GM10248 (cell line): ENCODE measurements at regions of chr17 and their contacts with region 1.

Region 1: DNA sequence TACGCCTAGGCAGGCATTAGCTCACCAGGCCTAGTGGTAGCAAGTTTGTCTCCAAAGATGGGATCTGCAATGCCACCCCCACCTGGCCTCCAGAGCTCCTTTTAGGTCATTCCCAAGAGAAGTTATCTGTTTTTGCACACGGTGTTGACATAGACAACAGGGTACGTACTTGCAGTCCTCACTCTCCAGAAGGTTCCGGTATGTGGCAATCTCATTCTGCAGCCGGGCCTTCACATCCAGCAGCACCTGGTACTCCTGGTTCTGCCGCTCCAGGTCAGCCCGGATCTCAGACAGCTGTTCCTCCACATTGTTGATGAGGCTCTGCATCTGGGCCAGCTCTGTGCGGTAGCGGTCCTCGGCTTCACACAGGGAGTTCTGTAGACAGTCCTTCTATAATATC is 9.8 kb upstream of the KRT31 start:
- DNase-seq: no peak
- CTCF ChIP-seq: no peak

Region 2: GRCh38 chr17:41417576-41418015 is 10.4 kb after region 1 on chr17:
- CTCF ChIA-PET with region 1: interaction called, 13 read pairs
- POLR2A ChIA-PET with region 1: no interaction called
- DNase-seq: peak; percentile 41
- CTCF ChIP-seq: peak; percentile 33

Region 3: DNA sequence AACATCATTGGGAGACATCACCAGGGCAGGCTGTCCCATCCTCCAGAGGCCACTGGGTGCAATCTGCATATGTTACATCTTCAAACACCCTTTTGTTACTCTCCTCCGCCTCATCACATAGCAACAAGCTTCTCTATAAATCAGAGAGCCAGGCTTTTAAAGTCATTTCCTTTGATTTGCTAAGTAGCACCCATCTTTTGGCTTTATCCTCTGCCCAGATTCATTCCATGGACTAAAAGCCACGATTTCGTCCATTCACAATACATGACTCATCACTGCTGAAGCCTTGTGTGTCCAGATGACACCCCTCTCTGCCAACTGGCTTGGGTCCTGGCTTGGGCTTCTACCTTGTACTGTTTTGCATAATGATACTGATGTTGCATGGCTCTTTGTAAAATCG is 35.5 kb after region 1 on chr17:
- CTCF ChIA-PET with region 1: no interaction called
- POLR2A ChIA-PET with region 1: no interaction called
- DNase-seq: no peak
- CTCF ChIP-seq: no peak

Region 4: GRCh38 chr17:42050393-42051012 is 643.3 kb after region 1 on chr17 and contains the start of gene C17orf113:
- CTCF ChIA-PET with region 1: no interaction called
- POLR2A ChIA-PET with region 1: no interaction called
- DNase-seq: peak; percentile 85
- CTCF ChIP-seq: peak; percentile 58